ENCODE measurements at regions of chr7 and their contacts with region 1.

Region 1: DNA sequence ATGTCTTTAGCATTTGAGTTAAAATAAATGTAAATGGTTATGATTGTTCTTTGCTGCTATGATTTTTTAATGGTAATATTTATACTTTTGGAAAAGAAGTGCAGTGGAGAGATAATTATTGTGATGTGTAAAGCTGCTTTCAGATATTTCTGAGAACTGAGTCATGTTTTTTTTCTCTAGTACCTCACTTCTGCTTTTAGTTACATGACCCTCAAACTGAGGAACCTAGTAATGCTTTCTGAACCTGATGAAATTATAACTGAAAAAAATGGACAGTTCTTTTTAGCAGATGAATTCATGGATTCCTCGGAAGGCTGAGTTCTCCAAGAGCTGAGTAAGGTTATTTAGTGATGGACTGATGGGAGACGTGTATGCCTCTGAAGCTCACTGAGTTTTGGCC is 167.8 kb downstream of the CDCA7L start:
- DNase-seq: no peak
- H3K4me3 ChIP-seq: no peak overlapping the region
- H3K27ac ChIP-seq: no peak overlapping the region
- H3K27me3 ChIP-seq: peaks cover 0 to 3% (median 0%) of the 10 kb centered on the region in 45 donors
- CTCF ChIP-seq: no peak

Region 2: DNA sequence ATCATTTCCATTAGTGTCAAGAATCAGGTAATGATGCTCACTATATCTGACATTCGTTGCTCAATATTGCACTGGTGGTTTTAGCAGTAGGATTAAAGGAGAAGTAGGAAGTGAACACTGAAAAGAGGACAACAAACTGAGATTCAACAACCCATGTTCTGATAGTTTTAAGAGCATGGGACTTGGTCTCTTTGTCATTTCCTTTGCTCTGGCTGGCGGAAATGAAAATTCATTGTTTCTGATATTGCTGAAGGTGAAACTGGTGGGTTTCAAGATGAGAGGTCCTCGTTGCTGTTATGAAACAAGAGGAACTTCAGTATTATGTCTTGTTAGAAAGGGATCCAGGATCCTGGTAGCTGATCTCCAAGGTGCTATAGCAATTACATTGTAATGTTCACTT is 106.1 kb before region 1 on chr7:
- intact Hi-C with region 1: no loop called
- DNase-seq: no peak
- H3K4me3 ChIP-seq: no peak overlapping the region
- H3K27ac ChIP-seq: no peak overlapping the region
- H3K27me3 ChIP-seq: no peaks in the 10 kb centered on the region
- CTCF ChIP-seq: no peak

Region 3: DNA sequence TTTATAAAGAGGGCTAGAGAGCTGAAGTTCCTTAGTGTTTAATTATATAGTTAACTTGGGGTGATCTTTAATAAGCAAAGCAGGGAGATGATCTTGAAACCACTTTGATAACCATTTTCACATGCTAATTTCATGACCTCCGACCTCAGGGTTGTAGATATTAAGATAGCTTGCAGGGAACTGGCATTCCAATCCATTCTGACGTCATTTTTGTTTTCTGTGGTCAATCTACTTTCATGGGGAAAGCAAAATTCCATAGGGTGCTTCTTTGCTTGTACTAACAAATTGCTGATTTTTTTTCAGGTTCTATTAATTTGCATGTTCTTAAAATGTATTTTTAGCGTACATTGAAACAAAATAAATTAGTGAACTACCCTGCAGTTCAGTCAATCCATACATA is 28.5 kb after region 1 on chr7:
- intact Hi-C with region 1: no loop called
- DNase-seq: no peak
- H3K4me3 ChIP-seq: no peak overlapping the region
- H3K27ac ChIP-seq: no peak overlapping the region
- H3K27me3 ChIP-seq: no peaks in the 10 kb centered on the region
- CTCF ChIP-seq: no peak

Region 4: DNA sequence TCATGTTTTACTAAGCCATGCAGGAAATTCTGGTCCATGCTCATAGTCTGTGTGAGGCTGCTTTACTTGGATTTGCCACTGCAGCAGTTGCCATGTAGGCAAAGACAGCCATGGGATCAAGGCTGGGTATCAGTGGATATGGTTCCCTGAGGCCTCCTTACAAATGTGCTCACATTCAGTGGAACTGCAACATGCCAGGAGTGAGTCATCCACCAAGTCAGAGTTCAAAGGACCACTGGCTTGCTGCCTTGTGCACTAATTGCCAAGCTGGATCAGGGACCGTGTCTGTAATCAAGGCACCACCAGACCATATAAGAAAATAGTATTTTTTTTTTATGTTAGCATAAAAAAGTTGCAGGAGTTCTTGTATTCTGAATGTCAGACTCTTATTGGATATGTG is 66.8 kb after region 1 on chr7:
- intact Hi-C with region 1: no loop called
- DNase-seq: no peak
- H3K4me3 ChIP-seq: no peak overlapping the region
- H3K27ac ChIP-seq: no peak overlapping the region
- H3K27me3 ChIP-seq: no peaks in the 10 kb centered on the region
- CTCF ChIP-seq: no peak

Region 5: DNA sequence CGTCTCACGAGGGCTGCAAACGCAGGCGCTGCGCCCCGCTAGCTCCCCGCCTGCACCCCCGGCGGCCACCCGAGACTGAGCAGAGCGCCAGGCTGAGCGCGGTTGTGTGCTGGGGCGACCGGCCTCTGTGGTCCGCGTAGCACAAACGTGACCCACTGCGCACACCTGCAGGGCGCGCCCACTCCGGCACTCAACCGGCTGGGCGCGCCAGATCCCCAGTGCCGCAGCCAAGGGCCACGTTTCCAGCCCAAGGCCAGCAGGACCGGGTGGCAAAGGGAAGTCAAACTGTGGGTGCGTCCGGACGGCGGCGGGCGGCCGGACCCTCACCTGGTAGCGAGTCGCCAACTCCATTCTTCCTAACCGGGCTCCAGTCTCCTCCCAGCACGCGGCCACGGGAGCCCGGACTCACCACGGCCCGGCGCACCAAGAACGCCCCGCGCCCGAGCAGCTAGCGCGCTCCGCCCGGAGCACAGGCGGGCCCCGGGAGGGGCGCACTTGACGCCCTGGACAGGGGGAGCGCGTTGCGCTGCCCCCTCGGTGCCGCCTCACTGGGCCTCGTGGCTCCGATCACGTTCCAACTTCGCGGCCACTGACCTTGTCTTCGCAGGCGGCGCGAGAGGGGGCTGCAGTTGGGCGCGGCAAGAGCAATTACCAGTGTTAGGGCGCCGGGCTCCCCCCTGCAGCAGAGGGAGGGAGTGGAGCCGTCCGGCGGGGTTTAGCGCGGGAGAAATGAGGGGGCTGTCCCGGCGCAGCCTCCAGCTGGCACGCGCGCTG is 167.7 kb after region 1 on chr7 and contains the start of gene CDCA7L:
- intact Hi-C with region 1: loop called (anchors 5 to 10 kb)
- DNase-seq: peak; percentile 35 to 76 (median 57)
- H3K4me3 ChIP-seq: peak within 1 kb of the TSS; percentile 41 to 85 (median 70)
- H3K27ac ChIP-seq: peak within 1 kb of the TSS in 49 of 59 donors; percentile 19 to 88 (median 67)
- H3K27me3 ChIP-seq: peaks cover 0 to 36% (median 7%) of the 10 kb centered on the region in 45 donors
- CTCF ChIP-seq: peak in 12 of 56 donors; percentile 3 to 33 (median 18)
- total RNA-seq, gene CDCA7L: 4.7 to 28.4 (median 10.8) TPM

Region 6: DNA sequence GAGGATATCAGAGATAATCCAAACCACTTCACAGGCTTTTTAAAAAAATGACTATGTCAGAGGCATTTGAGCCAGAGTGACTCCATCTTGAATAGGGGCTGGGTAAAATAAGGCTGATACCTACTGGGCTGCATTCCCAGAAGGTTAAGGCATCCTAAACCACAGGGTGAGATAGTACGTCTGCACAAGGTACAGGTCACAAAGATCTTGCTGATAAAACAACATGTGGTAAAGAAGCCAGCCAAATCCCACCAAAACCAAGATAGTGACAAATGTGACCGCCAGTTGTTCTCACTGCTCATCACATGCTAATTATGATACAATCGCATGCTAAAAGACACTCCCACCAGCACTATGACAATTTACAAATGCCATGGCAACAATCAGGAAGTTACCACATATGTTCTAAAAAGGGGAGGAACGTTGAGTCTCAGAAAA is 401.5 kb after region 1 on chr7:
- intact Hi-C with region 1: no loop called
- DNase-seq: no peak
- H3K4me3 ChIP-seq: no peak overlapping the region
- H3K27ac ChIP-seq: peak overlapping the region in 6 of 59 donors; percentile 5 to 92 (median 48)
- H3K27me3 ChIP-seq: no peaks in the 10 kb centered on the region
- CTCF ChIP-seq: no peak

Measured in dorsolateral prefrontal cortex (tissue), 120 donors.